ENCODE measurements at regions of chr1 and their contacts with region 1.

Region 1: DNA sequence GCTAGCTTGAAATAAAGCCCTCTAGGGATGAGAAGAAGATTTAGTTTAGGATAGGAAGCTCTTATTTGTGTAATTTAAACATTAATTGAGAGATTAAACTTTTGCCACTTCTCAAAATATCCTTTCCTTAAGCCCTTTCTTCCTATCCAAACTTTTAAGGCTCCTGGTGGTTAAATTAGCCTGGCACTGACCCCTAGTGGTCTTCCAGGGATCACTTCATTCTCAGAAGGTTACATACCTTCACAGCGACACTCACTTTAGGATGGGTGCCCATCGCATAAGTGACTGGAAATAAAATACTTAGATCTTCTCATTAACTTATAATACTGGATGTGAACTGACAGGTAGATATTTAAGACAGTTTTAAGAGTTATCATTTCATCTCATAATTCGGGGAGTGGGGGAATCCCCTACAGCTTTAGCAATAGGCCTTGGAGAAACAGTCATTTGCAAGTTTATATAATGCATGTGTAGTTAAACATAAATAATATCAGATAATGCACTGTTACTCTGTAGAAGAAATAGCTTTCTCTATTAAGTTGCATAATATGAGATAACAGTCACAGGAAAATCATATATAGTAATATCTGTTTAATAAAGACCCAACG is 7.4 kb downstream of the LHX9 start:
- DNase-seq: peak; percentile 58
- H3K4me3 Mint-ChIP-seq: no peak overlapping the region
- H3K27ac Mint-ChIP-seq: no peak overlapping the region
- H3K4me1 Mint-ChIP-seq: peaks cover 15% of the 10 kb centered on the region
- H3K27me3 Mint-ChIP-seq: peaks cover 49% of the 10 kb centered on the region

Region 2: DNA sequence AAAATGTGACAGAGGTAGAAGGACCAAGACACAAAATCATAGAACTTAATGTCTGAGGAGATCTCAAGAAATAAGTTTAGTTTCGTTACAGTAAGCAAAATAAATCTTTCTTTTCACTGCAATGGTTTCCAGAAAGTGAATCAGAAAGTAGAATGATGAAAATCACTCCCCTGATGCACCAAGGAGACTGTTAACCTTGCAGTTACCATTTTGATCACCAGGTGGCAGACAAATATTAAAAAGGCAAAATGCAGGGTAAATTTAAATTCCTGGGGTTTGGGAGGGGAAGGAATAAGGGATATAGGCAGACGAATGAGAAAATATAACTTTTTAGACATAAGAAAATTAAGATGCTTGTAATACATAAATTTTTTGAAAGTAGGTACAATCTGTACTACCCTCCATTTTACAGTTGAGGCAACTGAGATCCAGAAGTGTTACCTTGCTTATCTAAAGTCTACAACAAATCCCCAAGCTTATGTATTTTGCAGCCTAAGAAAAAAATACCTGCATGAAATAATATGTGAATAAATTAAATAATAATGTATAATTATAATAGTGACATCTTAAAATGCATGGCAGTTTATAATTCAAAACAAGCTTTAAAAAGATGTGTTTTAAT is 403.4 kb before region 1 on chr1:
- CTCF ChIA-PET with region 1: interaction called, 17 read pairs
- intact Hi-C with region 1: loop called (anchors 1 kb)
- DNase-seq: peak; percentile 37
- H3K4me3 Mint-ChIP-seq: no peak overlapping the region
- H3K27ac Mint-ChIP-seq: no peak overlapping the region
- H3K4me1 Mint-ChIP-seq: no peaks in the 10 kb centered on the region
- H3K27me3 Mint-ChIP-seq: no peaks in the 10 kb centered on the region

Region 3: GRCh38 chr1:197614916-197615692 is 309.5 kb before region 1 on chr1:
- CTCF ChIA-PET with region 1: interaction called, 15 read pairs
- intact Hi-C with region 1: loop called (anchors 1 kb)
- DNase-seq: peak; percentile 49
- H3K4me3 Mint-ChIP-seq: no peak overlapping the region
- H3K27ac Mint-ChIP-seq: no peak overlapping the region
- H3K4me1 Mint-ChIP-seq: no peaks in the 10 kb centered on the region
- H3K27me3 Mint-ChIP-seq: no peaks in the 10 kb centered on the region

Region 4: DNA sequence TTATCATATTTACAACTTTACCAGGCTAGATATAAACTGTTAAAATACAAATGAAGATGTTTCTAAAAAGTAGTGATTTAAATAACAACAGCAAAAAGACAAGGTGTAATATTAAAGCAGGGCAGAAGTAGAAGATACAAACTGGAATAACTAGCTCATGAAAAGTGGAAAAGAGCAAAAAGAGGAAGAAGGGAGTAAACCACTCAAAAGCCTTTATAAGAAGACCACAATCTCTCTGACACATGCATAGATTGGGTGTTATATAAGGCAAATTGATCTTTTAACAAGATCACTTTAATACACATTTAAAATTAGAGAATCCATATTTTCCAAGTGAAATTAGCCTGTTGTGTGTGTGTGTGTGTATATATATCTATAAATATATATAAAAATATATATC is 154.4 kb before region 1 on chr1:
- CTCF ChIA-PET with region 1: no interaction called
- intact Hi-C with region 1: no loop called
- DNase-seq: no peak
- H3K4me3 Mint-ChIP-seq: no peak overlapping the region
- H3K27ac Mint-ChIP-seq: no peak overlapping the region
- H3K4me1 Mint-ChIP-seq: peaks cover 64% of the 10 kb centered on the region
- H3K27me3 Mint-ChIP-seq: no peaks in the 10 kb centered on the region

Region 5: DNA sequence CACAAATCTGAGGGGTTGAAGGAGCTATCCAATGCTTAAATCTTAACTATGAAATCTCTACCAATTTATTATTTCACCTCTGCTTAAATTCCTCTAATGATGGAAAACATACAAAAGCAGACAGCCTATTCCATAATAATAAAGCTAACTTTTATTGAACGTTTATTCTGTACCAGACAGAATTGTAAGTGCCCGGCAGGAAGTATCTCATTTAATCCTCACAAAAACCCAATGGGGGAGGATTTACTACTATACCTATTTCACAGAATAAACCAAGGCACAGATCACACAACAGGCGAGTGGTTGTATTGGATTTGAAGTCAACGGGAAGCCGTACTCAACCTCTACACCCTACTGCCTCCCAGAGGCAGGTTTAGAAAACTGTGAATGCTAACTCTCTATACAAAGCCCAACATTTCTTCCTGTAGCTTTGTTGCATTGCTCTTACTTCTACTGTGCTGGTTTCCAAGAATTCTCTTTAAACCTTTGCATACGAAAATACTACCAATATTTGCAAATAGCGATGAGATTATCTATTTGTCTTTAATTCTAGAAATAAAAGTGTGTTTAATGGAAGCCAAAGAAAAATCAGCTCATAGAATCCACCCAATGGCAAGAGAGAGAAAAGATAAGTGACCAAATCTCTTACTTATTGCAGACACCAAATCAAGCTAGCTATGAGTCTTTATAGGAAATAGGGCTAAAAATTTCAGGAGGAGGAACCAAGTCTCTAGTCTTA is 55.7 kb before region 1 on chr1:
- CTCF ChIA-PET with region 1: interaction called, 6 read pairs
- intact Hi-C with region 1: loop called (anchors 1 kb)
- DNase-seq: peak; percentile 56
- H3K4me3 Mint-ChIP-seq: no peak overlapping the region
- H3K27ac Mint-ChIP-seq: no peak overlapping the region
- H3K4me1 Mint-ChIP-seq: no peaks in the 10 kb centered on the region
- H3K27me3 Mint-ChIP-seq: no peaks in the 10 kb centered on the region

Measured in activated naive CD4-positive, alpha-beta T cell treated with anti-CD3 and anti-CD28 coated beads for 36 hours (primary cell).